IMR-90 (cell line): ENCODE measurements at regions of chr16 and their contacts with region 1.

Region 1: GRCh38 chr16:24975428-24975889 is 39.7 kb downstream of the ARHGAP17 start:
- DNase-seq: peak; percentile 66
- ATAC-seq: no peak
- H3K4me3 ChIP-seq: no peak overlapping the region
- H3K27ac ChIP-seq: peak overlapping the region; percentile 97
- H3K4me1 ChIP-seq: peaks cover 27% of the 10 kb centered on the region
- H3K27me3 ChIP-seq: no peaks in the 10 kb centered on the region
- CTCF ChIP-seq: no peak
- POLR2A ChIP-seq: no peak
- RAD21 ChIP-seq: no peak

Region 2: DNA sequence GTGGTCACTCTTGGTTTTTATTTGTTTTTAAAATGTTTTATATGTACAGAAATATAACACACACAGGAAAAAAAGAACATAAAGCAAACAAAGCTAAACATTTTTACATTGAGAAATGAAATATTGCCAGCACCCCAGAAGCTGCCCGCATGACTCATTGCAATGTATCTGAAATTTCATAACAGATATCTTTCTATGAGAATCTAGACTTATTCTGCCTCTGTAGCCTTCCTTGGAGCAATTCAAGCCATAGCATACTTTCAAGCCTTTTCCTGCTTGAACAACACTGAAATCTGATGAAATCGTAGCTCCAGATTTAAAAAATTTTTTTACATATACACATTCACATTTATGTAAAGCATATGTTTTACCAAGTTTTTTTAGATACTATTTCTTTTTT is 349.2 kb before region 1 on chr16:
- CTCF ChIA-PET with region 1: no interaction called
- POLR2A ChIA-PET with region 1: no interaction called
- dilution Hi-C with region 1: no loop called
- in situ Hi-C with region 1: no loop called
- intact Hi-C with region 1: no loop called
- DNase-seq: peak; percentile 67
- ATAC-seq: peak; percentile 89
- H3K4me3 ChIP-seq: no peak overlapping the region
- H3K27ac ChIP-seq: no peak overlapping the region; the same call in 1 of the 2 replicates
- H3K4me1 ChIP-seq: peaks cover 2% of the 10 kb centered on the region; the same call in 1 of the 2 replicates
- H3K27me3 ChIP-seq: no peaks in the 10 kb centered on the region
- CTCF ChIP-seq: no peak
- POLR2A ChIP-seq: no peak
- RAD21 ChIP-seq: no peak

Region 3: DNA sequence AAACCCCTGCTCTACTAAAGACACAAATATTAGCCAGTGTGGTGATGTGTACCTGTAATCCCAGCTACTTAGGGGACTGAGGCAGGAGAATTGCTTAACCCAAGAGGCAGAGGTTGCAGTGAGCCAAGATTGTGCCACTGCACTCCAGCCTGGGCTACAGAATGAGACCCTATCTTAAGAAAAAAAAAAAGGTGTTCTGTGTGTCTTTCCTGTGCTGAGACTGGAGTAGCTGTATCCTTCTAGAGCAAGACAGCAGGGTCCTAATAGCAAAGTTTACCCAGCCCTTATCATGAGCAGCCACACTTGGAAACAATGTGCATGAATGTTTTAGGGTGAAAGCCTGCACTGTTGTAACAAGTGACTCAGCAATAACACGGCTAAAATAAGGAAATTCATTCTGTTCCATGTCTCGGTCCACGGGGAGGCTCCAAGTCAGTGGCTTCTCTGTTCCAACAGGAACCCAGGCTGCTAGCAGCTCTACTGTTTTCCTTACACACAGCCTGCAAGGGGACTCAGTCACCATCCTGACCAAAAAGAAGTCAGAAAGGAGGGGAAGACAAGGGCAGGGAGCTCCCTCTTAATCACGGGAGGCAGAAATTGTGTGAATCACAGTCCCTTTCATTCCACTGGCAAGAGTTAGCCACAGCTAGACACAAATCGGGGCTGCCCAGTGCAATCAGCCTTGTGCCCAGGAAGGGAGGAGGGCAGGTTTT is 136.7 kb before region 1 on chr16:
- CTCF ChIA-PET with region 1: no interaction called
- POLR2A ChIA-PET with region 1: no interaction called
- dilution Hi-C with region 1: no loop called
- in situ Hi-C with region 1: no loop called
- intact Hi-C with region 1: no loop called
- DNase-seq: peak; percentile 70
- ATAC-seq: peak; percentile 82
- H3K4me3 ChIP-seq: peak overlapping the region; percentile 4; the same call in 1 of the 2 replicates
- H3K27ac ChIP-seq: peak overlapping the region; percentile 69
- H3K4me1 ChIP-seq: peaks cover 5% of the 10 kb centered on the region
- H3K27me3 ChIP-seq: no peaks in the 10 kb centered on the region
- CTCF ChIP-seq: no peak
- POLR2A ChIP-seq: no peak
- RAD21 ChIP-seq: no peak

Region 4: GRCh38 chr16:24986512-24987303 is 11.2 kb after region 1 on chr16:
- CTCF ChIA-PET with region 1: no interaction called
- POLR2A ChIA-PET with region 1: no interaction called
- dilution Hi-C with region 1: no loop called
- in situ Hi-C with region 1: no loop called
- intact Hi-C with region 1: loop called (anchors 1 kb)
- DNase-seq: peak; percentile 88
- ATAC-seq: peak; percentile 64
- H3K4me3 ChIP-seq: peak overlapping the region; percentile 3; the same call in 1 of the 2 replicates
- H3K27ac ChIP-seq: peak overlapping the region; percentile 97
- H3K4me1 ChIP-seq: peaks cover 35% of the 10 kb centered on the region
- H3K27me3 ChIP-seq: no peaks in the 10 kb centered on the region
- CTCF ChIP-seq: no peak
- POLR2A ChIP-seq: no peak; the same call in none of the 2 replicates
- RAD21 ChIP-seq: no peak

Region 5: GRCh38 chr16:25014500-25015147 is 39.2 kb after region 1 on chr16:
- CTCF ChIA-PET with region 1: interaction called, 5 read pairs
- POLR2A ChIA-PET with region 1: no interaction called
- dilution Hi-C with region 1: no loop called
- in situ Hi-C with region 1: no loop called
- intact Hi-C with region 1: loop called (anchors 5 kb)
- DNase-seq: peak; percentile 48
- ATAC-seq: peak; percentile 45
- H3K4me3 ChIP-seq: peak overlapping the region; percentile 90
- H3K27ac ChIP-seq: peak overlapping the region; percentile 98
- H3K4me1 ChIP-seq: peaks cover 24% of the 10 kb centered on the region
- H3K27me3 ChIP-seq: no peaks in the 10 kb centered on the region
- CTCF ChIP-seq: no peak
- POLR2A ChIP-seq: no peak
- RAD21 ChIP-seq: peak; percentile 3; the same call in 1 of the 2 replicates

Region 6: DNA sequence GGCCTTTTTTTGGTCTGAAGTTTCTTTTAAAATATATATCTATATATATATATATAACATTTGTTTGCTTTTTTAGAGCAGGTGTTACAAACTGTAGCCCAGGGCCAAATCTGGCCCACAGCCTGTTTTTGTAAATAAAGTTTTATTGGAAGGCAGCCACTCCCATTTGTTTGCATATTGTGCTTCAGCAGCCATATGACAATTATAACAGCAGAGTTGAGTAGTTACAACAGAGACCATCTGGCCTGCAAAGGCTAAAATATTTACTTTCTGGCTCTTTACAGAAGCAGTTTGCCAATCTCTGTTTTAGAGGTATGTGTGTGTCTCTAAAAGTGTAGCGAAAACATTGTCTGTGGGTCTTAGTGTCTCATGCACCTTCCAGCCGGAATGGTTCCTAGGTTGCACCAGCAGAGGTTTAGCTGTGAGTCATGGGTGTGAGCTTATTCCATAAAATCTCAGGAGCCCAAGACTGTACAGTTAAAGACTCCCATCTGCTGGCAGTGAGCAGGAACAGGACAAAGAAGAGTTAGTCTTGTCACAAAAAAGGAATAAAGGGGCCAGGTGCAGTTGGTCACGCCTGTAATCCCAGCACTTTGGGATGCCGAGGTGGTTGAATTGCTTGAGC is 159.9 kb after region 1 on chr16:
- CTCF ChIA-PET with region 1: interaction called, 8 read pairs
- POLR2A ChIA-PET with region 1: no interaction called
- dilution Hi-C with region 1: no loop called
- in situ Hi-C with region 1: no loop called
- intact Hi-C with region 1: loop called (anchors 10 kb)
- DNase-seq: peak; percentile 83
- ATAC-seq: peak; percentile 97
- H3K4me3 ChIP-seq: no peak overlapping the region
- H3K27ac ChIP-seq: no peak overlapping the region
- H3K4me1 ChIP-seq: no peaks in the 10 kb centered on the region
- H3K27me3 ChIP-seq: no peaks in the 10 kb centered on the region
- CTCF ChIP-seq: peak; percentile 71
- POLR2A ChIP-seq: no peak
- RAD21 ChIP-seq: peak; percentile 81